CD4-positive, alpha-beta memory T cell (primary cell): ENCODE measurements at regions of chr11 and their contacts with region 1.

Region 1: GRCh38 chr11:9757809-9758636 is 94.1 kb downstream of the SWAP70 start:
- DNase-seq: peak; percentile 90 to 93 (median 90)
- H3K4me3 ChIP-seq: peak overlapping the region; percentile 44 to 75
- H3K4me3 Mint-ChIP-seq: peak overlapping the region; percentile 76 to 89 (median 84)
- H3K27ac ChIP-seq: peak overlapping the region; percentile 60
- H3K27ac Mint-ChIP-seq: peak overlapping the region; percentile 85 to 91 (median 89)
- H3K4me1 ChIP-seq: peaks cover 16% of the 10 kb centered on the region
- H3K4me1 Mint-ChIP-seq: peaks cover 10 to 25% (median 17%) of the 10 kb centered on the region in 4 donors
- H3K27me3 ChIP-seq: no peaks in the 10 kb centered on the region
- H3K27me3 Mint-ChIP-seq: no peaks in the 10 kb centered on the region

Region 2: GRCh38 chr11:9573052-9573774 is 184.8 kb before region 1 on chr11 and contains the start of gene WEE1:
- CTCF ChIA-PET with region 1: no interaction called
- POLR2A ChIA-PET with region 1: interaction called, 6 read pairs
- intact Hi-C with region 1: loop called (anchors 1 kb)
- DNase-seq: peak; percentile 94 to 96 (median 95)
- H3K4me3 ChIP-seq: peak within 1 kb of the TSS; percentile 42 to 80
- H3K4me3 Mint-ChIP-seq: peak within 1 kb of the TSS; percentile 85 to 93 (median 89)
- H3K27ac ChIP-seq: peak within 1 kb of the TSS; percentile 86
- H3K27ac Mint-ChIP-seq: peak within 1 kb of the TSS; percentile 85 to 95 (median 92)
- H3K4me1 ChIP-seq: peaks cover 55% of the 10 kb centered on the region
- H3K4me1 Mint-ChIP-seq: peaks cover 24 to 56% (median 39%) of the 10 kb centered on the region in 4 donors
- H3K27me3 ChIP-seq: no peaks in the 10 kb centered on the region
- H3K27me3 Mint-ChIP-seq: no peaks in the 10 kb centered on the region
- total RNA-seq, gene WEE1: 11.1 to 11.7 TPM

Region 3: GRCh38 chr11:9688716-9689511 is 69.1 kb before region 1 on chr11:
- CTCF ChIA-PET with region 1: no interaction called
- POLR2A ChIA-PET with region 1: no interaction called
- intact Hi-C with region 1: no loop called
- DNase-seq: no peak
- H3K4me3 ChIP-seq: no peak overlapping the region
- H3K4me3 Mint-ChIP-seq: no peak overlapping the region
- H3K27ac ChIP-seq: no peak overlapping the region
- H3K27ac Mint-ChIP-seq: no peak overlapping the region
- H3K4me1 ChIP-seq: no peaks in the 10 kb centered on the region
- H3K4me1 Mint-ChIP-seq: no peaks in the 10 kb centered on the region
- H3K27me3 ChIP-seq: no peaks in the 10 kb centered on the region
- H3K27me3 Mint-ChIP-seq: no peaks in the 10 kb centered on the region

Region 4: GRCh38 chr11:9861860-9862725 is 104.1 kb after region 1 on chr11:
- CTCF ChIA-PET with region 1: interaction called, 4 read pairs
- POLR2A ChIA-PET with region 1: no interaction called
- intact Hi-C with region 1: loop called (anchors 1 kb)
- DNase-seq: peak; percentile 30 to 54 (median 33)
- H3K4me3 ChIP-seq: no peak overlapping the region
- H3K4me3 Mint-ChIP-seq: no peak overlapping the region
- H3K27ac ChIP-seq: no peak overlapping the region
- H3K27ac Mint-ChIP-seq: no peak overlapping the region
- H3K4me1 ChIP-seq: peaks cover 13% of the 10 kb centered on the region
- H3K4me1 Mint-ChIP-seq: peaks cover 12 to 27% (median 17%) of the 10 kb centered on the region in 4 donors
- H3K27me3 ChIP-seq: no peaks in the 10 kb centered on the region
- H3K27me3 Mint-ChIP-seq: no peaks in the 10 kb centered on the region

Region 5: DNA sequence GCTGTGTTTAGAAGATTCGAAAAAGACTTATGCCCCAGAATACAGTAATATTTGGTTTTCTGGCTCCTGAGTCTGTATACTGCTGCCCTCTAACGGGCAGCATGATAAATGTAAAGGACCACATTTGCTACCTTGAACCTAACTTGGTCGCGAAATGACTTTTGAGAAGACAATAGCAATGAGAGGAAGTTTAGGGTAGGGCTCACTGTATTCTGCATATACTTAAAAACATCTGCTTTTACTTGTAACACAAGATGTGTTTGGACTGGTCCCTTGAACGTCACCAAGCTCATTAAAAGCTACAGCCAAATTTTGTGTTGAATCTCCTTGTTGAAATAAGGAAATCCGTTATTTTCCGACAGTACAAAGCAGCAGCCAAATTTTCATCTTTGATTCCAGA is 215.0 kb after region 1 on chr11:
- CTCF ChIA-PET with region 1: interaction called, 14 read pairs
- POLR2A ChIA-PET with region 1: interaction called, 3 read pairs
- intact Hi-C with region 1: loop called (anchors 1 kb)
- DNase-seq: peak in 4 of 5 donors; percentile 8 to 32 (median 18)
- H3K4me3 ChIP-seq: no peak overlapping the region
- H3K4me3 Mint-ChIP-seq: no peak overlapping the region
- H3K27ac ChIP-seq: no peak overlapping the region
- H3K27ac Mint-ChIP-seq: no peak overlapping the region
- H3K4me1 ChIP-seq: no peaks in the 10 kb centered on the region
- H3K4me1 Mint-ChIP-seq: no peaks in the 10 kb centered on the region
- H3K27me3 ChIP-seq: no peaks in the 10 kb centered on the region
- H3K27me3 Mint-ChIP-seq: no peaks in the 10 kb centered on the region

Region 6: GRCh38 chr11:10322830-10323792 is 565.1 kb after region 1 on chr11:
- CTCF ChIA-PET with region 1: interaction called, 9 read pairs
- POLR2A ChIA-PET with region 1: interaction called, 3 read pairs
- intact Hi-C with region 1: loop called (anchors 1 kb)
- DNase-seq: peak; percentile 48 to 81 (median 50)
- H3K4me3 ChIP-seq: no peak overlapping the region
- H3K4me3 Mint-ChIP-seq: peak overlapping the region in 2 of 8 donors; percentile 3 to 18
- H3K27ac ChIP-seq: no peak overlapping the region
- H3K27ac Mint-ChIP-seq: peak overlapping the region in 3 of 7 donors; percentile 46 to 76 (median 64)
- H3K4me1 ChIP-seq: peaks cover 5% of the 10 kb centered on the region
- H3K4me1 Mint-ChIP-seq: peaks cover 0 to 2% (median under 1%) of the 10 kb centered on the region in 4 donors
- H3K27me3 ChIP-seq: peaks cover 4% of the 10 kb centered on the region
- H3K27me3 Mint-ChIP-seq: peaks cover 8 to 15% of the 10 kb centered on the region in 2 donors